ENCODE measurements at regions of chr7 and their contacts with region 1.

Region 1: GRCh38 chr7:76262683-76263402 is 39.6 kb upstream of the HSPB1 start:
- DNase-seq: peak in 2 of 3 donors; percentile 61 to 73
- ATAC-seq: peak; percentile 75 to 92 (median 85)
- H3K4me3 ChIP-seq: no peak overlapping the region
- H3K27ac ChIP-seq: no peak overlapping the region
- H3K4me1 ChIP-seq: peaks cover 0 to 7% (median 0%) of the 10 kb centered on the region in 4 donors
- H3K27me3 ChIP-seq: peaks cover 0 to 8% of the 10 kb centered on the region in 2 donors
- CTCF ChIP-seq: peak; percentile 61 to 79 (median 74)
- POLR2A ChIP-seq: no peak

Region 2: DNA sequence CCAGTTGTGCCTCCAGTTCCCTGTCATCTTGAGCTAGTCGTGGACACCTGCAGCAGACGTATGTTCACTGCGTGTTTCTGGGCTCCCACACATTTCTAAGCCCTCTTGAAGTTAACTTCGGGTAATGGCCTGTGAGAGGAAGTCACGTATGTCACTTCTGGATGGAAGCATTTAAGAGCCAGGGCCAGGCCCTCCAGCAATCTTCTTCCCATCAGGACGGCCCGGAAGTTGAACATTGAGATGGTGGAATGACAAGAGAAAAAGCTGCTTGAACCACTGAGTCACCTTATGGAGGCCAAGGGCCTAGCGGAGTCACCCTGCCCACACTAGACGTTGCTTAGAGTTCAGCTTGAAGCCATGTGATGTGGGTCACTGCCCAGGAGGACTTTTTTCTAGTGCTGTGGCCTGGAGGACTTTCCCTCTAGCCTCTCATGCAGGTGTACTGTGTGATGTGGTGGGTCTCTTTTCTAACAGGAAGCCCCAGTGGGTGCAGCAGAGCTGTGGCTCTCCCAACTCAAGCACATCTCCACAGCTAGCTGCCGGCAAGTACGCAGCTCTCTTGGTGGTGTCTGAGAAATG is 334.4 kb before region 1 on chr7:
- intact Hi-C with region 1: no loop called
- DNase-seq: no peak
- ATAC-seq: no peak
- H3K4me3 ChIP-seq: no peak overlapping the region
- H3K27ac ChIP-seq: peak overlapping the region; percentile 81 to 100 (median 95)
- H3K4me1 ChIP-seq: peaks cover 0 to 81% (median 30%) of the 10 kb centered on the region in 4 donors
- H3K27me3 ChIP-seq: no peaks in the 10 kb centered on the region
- CTCF ChIP-seq: no peak
- POLR2A ChIP-seq: no peak

Region 3: GRCh38 chr7:76179686-76180085 is 83.2 kb before region 1 on chr7:
- intact Hi-C with region 1: loop called (anchors 5 to 10 kb)
- DNase-seq: no peak
- ATAC-seq: no peak
- H3K4me3 ChIP-seq: no peak overlapping the region
- H3K27ac ChIP-seq: no peak overlapping the region
- H3K4me1 ChIP-seq: no peaks in the 10 kb centered on the region
- H3K27me3 ChIP-seq: no peaks in the 10 kb centered on the region
- CTCF ChIP-seq: no peak
- POLR2A ChIP-seq: no peak

Region 4: GRCh38 chr7:76185187-76185896 is 77.5 kb before region 1 on chr7:
- intact Hi-C with region 1: loop called in 1 of 2 experiments (anchors 10 kb)
- DNase-seq: no peak
- ATAC-seq: no peak
- H3K4me3 ChIP-seq: no peak overlapping the region
- H3K27ac ChIP-seq: no peak overlapping the region
- H3K4me1 ChIP-seq: no peaks in the 10 kb centered on the region
- H3K27me3 ChIP-seq: no peaks in the 10 kb centered on the region
- CTCF ChIP-seq: no peak
- POLR2A ChIP-seq: no peak